Breast epithelium (tissue), 4 donors: ENCODE measurements at regions of chr19 and their contacts with region 1.

Region 1: GRCh38 chr19:48501496-48502350 is 9.9 kb downstream of the LMTK3 start:
- DNase-seq: peak; percentile 95 to 98
- H3K4me3 ChIP-seq: peak overlapping the region in 2 of 3 donors; percentile 45 to 54
- H3K27ac ChIP-seq: peak overlapping the region; percentile 48 to 80
- H3K4me1 ChIP-seq: no peaks in the 10 kb centered on the region
- H3K27me3 ChIP-seq: peaks cover 8 to 21% of the 10 kb centered on the region in 2 donors
- CTCF ChIP-seq: no peak
- POLR2A ChIP-seq: no peak

Region 2: DNA sequence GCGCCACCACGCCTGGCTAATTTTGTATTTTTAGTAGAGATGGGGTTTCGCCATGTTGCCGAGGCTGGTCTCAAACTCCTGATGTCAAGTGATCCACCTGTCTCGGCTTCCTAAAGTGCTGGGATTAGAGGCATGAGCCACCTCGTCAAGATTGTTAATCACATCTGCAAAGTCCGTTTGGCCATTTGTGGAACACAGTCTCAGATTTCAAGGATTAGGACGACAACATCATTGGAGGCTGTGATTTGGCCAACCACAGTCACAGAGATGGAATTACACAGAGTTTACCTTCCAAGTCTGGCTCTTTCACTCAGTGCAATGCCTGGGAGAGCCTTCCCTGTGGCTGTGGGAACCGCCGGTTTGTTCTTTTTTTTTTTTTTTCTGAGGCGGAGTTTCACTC is 68.1 kb after region 1 on chr19:
- intact Hi-C with region 1: loop called (anchors 10 kb)
- DNase-seq: no peak
- H3K4me3 ChIP-seq: no peak overlapping the region
- H3K27ac ChIP-seq: peak overlapping the region in 1 of 2 donors; percentile 51
- H3K4me1 ChIP-seq: peaks cover 0 to 6% of the 10 kb centered on the region in 2 donors
- H3K27me3 ChIP-seq: no peaks in the 10 kb centered on the region
- CTCF ChIP-seq: no peak
- POLR2A ChIP-seq: no peak